Activated CD4-positive, alpha-beta memory T cell treated with anti-CD3 and anti-CD28 coated beads for 36 hours (primary cell): ENCODE measurements at regions of chr10 and their contacts with region 1.

Region 1: DNA sequence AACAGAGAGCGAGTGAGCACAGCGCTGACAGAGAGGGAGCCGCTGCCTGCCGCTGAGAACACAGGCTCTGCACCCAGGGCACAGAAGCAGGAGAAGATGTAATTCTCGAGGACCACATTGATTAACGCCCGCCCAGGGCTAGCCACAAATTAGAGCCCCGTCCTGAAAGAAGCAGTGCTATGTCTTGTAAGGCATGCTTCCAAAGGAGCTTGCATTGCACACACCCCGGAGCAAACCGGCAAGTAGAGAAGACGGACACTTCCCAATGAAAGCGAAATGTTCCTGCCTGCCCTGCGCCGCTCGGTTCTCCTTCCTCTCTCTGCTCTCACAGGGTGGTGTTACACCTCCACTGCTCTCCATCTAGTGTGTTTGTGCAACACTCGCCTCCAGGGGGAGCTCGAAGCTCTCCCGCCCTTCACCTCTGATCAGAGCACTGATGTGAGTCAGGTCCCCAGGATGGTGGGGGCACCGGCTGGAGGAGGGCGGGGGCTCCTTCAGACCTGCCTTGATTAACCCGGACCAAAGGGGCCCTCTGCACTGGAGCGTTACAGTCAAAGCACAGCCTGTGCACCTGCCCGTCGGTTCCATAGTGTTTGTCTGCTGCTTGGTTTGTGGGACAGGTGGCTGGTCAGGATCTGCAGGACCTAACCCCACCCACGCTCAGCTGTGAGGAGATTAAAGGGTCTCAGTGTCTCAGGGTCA is 316.5 kb downstream of the ADARB2 start:
- DNase-seq: peak; percentile 78
- H3K4me3 Mint-ChIP-seq: peak overlapping the region; percentile 21
- H3K27ac Mint-ChIP-seq: no peak overlapping the region
- H3K4me1 Mint-ChIP-seq: peaks cover 10% of the 10 kb centered on the region
- H3K27me3 Mint-ChIP-seq: peaks cover 37% of the 10 kb centered on the region

Region 2: GRCh38 chr10:1048732-1049424 is 371.9 kb before region 1 on chr10 and contains the start of gene IDI1:
- CTCF ChIA-PET with region 1: no interaction called
- POLR2A ChIA-PET with region 1: no interaction called
- intact Hi-C with region 1: no loop called
- DNase-seq: peak; percentile 97
- H3K4me3 Mint-ChIP-seq: peak within 1 kb of the TSS; percentile 93
- H3K27ac Mint-ChIP-seq: peak within 1 kb of the TSS; percentile 98
- H3K4me1 Mint-ChIP-seq: peaks cover 64% of the 10 kb centered on the region
- H3K27me3 Mint-ChIP-seq: no peaks in the 10 kb centered on the region
- total RNA-seq, gene IDI1: 83.1 to 83.8 TPM

Region 3: GRCh38 chr10:1403508-1404322 is 17.1 kb before region 1 on chr10:
- CTCF ChIA-PET with region 1: interaction called, 15 read pairs
- POLR2A ChIA-PET with region 1: no interaction called
- intact Hi-C with region 1: no loop called
- DNase-seq: no peak
- H3K4me3 Mint-ChIP-seq: no peak overlapping the region
- H3K27ac Mint-ChIP-seq: no peak overlapping the region
- H3K4me1 Mint-ChIP-seq: no peaks in the 10 kb centered on the region
- H3K27me3 Mint-ChIP-seq: peaks cover 6% of the 10 kb centered on the region

Region 4: DNA sequence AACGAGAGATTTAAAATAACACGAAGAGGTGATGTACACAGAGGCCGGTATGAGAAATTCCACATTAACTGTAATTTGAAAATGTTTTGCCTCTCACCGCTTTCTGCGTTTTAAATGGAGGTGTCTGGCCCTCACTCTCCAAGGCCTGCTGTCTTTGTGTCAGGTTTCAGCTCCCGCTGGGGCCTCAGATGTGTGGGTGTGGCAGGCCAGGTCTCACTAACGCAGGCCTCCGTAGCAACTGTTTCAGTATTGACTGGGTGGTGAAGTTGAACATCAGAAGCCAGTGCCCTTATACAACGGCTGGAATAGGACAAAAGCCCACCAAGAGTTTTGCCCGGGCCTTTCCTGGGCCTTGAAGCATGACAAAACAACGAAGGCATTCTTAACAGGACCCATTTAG is 13.4 kb after region 1 on chr10:
- CTCF ChIA-PET with region 1: interaction called, 10 read pairs
- POLR2A ChIA-PET with region 1: no interaction called
- intact Hi-C with region 1: no loop called
- DNase-seq: no peak
- H3K4me3 Mint-ChIP-seq: no peak overlapping the region
- H3K27ac Mint-ChIP-seq: no peak overlapping the region
- H3K4me1 Mint-ChIP-seq: no peaks in the 10 kb centered on the region
- H3K27me3 Mint-ChIP-seq: peaks cover 6% of the 10 kb centered on the region

Region 5: GRCh38 chr10:1674501-1674900 is 253.7 kb after region 1 on chr10:
- CTCF ChIA-PET with region 1: no interaction called
- POLR2A ChIA-PET with region 1: no interaction called
- intact Hi-C with region 1: no loop called
- DNase-seq: no peak
- H3K4me3 Mint-ChIP-seq: no peak overlapping the region
- H3K27ac Mint-ChIP-seq: no peak overlapping the region
- H3K4me1 Mint-ChIP-seq: no peaks in the 10 kb centered on the region
- H3K27me3 Mint-ChIP-seq: peaks cover 15% of the 10 kb centered on the region